ENCODE measurements at regions of chr18 and their contacts with region 1.

Region 1: DNA sequence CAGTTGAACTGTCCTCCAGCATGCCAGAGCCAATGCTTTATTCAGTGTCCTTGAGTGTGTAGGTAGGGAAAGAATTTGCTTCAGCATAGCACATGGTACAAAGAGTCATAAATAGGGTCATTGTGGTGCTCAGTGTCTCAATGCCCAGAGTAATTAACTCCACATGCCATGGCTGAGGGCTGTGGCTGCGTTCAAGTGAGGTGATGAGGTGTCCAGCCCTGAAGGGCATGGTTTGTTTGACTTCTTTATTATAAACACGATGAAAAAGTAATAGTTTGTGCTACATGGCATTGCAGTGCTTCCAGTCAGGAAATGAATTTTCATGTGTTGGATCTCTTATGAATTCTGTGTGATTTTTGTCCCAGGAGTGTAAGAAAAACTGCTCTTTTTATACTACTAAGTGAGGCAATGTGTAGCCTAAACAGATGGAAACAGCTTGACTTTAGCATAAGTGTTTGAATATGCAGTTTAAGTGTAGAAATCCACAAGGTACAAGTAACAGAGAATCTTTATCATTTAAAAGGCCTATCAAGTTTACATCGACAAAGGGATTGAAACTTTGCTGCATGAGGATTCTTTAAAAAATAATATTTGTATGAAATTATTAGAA is 507.9 kb upstream of the CDH2 start:
- DNase-seq: no peak
- ATAC-seq: no peak
- H3K4me3 ChIP-seq: no peak overlapping the region
- H3K4me3 Mint-ChIP-seq: no peak overlapping the region
- H3K27ac ChIP-seq: no peak overlapping the region
- H3K27ac Mint-ChIP-seq: no peak overlapping the region
- H3K4me1 ChIP-seq: no peaks in the 10 kb centered on the region
- H3K4me1 Mint-ChIP-seq: no peaks in the 10 kb centered on the region
- H3K27me3 ChIP-seq: no peaks in the 10 kb centered on the region
- H3K27me3 Mint-ChIP-seq: no peaks in the 10 kb centered on the region

Region 2: GRCh38 chr18:28626757-28627156 is 58.1 kb before region 1 on chr18:
- CTCF ChIA-PET with region 1: no interaction called
- POLR2A ChIA-PET with region 1: no interaction called
- intact Hi-C with region 1: loop called in 1 of 2 experiments (anchors 10 kb)
- DNase-seq: no peak
- ATAC-seq: no peak
- H3K4me3 ChIP-seq: no peak overlapping the region
- H3K4me3 Mint-ChIP-seq: no peak overlapping the region
- H3K27ac ChIP-seq: no peak overlapping the region
- H3K27ac Mint-ChIP-seq: no peak overlapping the region
- H3K4me1 ChIP-seq: no peaks in the 10 kb centered on the region
- H3K4me1 Mint-ChIP-seq: no peaks in the 10 kb centered on the region
- H3K27me3 ChIP-seq: no peaks in the 10 kb centered on the region
- H3K27me3 Mint-ChIP-seq: no peaks in the 10 kb centered on the region

Region 3: GRCh38 chr18:28735731-28736130 is 50.9 kb after region 1 on chr18:
- CTCF ChIA-PET with region 1: no interaction called
- POLR2A ChIA-PET with region 1: no interaction called
- intact Hi-C with region 1: no loop called
- DNase-seq: no peak
- ATAC-seq: no peak
- H3K4me3 ChIP-seq: no peak overlapping the region
- H3K4me3 Mint-ChIP-seq: no peak overlapping the region
- H3K27ac ChIP-seq: no peak overlapping the region
- H3K27ac Mint-ChIP-seq: no peak overlapping the region
- H3K4me1 ChIP-seq: no peaks in the 10 kb centered on the region
- H3K4me1 Mint-ChIP-seq: no peaks in the 10 kb centered on the region
- H3K27me3 ChIP-seq: no peaks in the 10 kb centered on the region
- H3K27me3 Mint-ChIP-seq: no peaks in the 10 kb centered on the region

Measured in naive thymus-derived CD4-positive, alpha-beta T cell (primary cell).